ENCODE measurements at regions of chr15 and their contacts with region 1.

Region 1: DNA sequence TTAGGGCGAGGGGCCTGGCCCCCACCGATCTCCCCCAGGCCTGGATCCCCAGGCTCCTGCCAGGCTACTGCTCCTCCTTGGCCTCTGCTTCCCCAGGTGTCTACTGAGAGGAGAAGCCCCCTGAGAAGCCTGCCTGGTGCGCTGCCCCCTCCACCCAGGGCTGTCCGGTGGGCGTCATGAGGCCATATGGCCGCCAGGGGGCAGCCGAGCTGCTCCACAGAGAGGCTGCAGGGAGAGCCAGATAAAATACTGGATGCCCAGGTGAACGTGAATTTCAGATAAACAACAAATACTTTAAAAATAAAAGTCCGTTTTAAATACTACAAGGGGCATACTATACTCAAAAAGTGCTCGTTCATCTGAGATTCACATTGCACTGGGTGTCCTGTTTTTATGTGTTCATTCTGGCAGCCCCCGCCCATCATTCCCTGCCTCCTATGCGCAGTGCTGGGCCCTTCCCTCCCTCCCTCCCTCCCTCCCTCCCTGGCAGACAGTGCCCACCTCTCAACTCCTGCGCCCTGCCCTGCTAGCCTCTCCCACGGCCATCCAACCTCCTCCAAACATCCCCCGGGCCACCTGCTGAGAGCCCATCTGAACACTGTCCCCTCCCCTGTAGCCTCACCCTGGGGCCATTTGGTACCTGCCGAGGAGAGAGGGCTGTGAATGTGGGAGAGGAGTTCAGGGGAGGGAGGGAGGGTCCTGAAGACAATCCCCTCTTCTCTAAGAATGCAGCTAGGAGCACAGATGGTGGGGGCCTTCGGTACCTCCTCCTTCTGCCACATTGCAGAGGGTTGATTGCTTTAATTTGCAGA is 29.6 kb downstream of the PSTPIP1 start:
- DNase-seq: peak; percentile 74
- ATAC-seq: peak; percentile 78
- H3K4me3 ChIP-seq: no peak overlapping the region
- H3K4me3 Mint-ChIP-seq: no peak overlapping the region
- H3K27ac ChIP-seq: no peak overlapping the region
- H3K27ac Mint-ChIP-seq: no peak overlapping the region
- H3K4me1 ChIP-seq: peaks cover 4 to 21% of the 10 kb centered on the region in 2 donors
- H3K4me1 Mint-ChIP-seq: peaks cover 17% of the 10 kb centered on the region
- H3K27me3 ChIP-seq: no peaks in the 10 kb centered on the region
- H3K27me3 Mint-ChIP-seq: no peaks in the 10 kb centered on the region
- CTCF ChIP-seq: peak; percentile 98

Region 2: GRCh38 chr15:76730262-76730661 is 294.2 kb before region 1 on chr15:
- CTCF ChIA-PET with region 1: no interaction called
- POLR2A ChIA-PET with region 1: no interaction called
- intact Hi-C with region 1: no loop called
- DNase-seq: no peak
- ATAC-seq: no peak
- H3K4me3 ChIP-seq: no peak overlapping the region
- H3K4me3 Mint-ChIP-seq: no peak overlapping the region
- H3K27ac ChIP-seq: no peak overlapping the region
- H3K27ac Mint-ChIP-seq: no peak overlapping the region
- H3K4me1 ChIP-seq: peaks cover 2 to 6% of the 10 kb centered on the region in 2 donors
- H3K4me1 Mint-ChIP-seq: peaks cover 12% of the 10 kb centered on the region
- H3K27me3 ChIP-seq: no peaks in the 10 kb centered on the region
- H3K27me3 Mint-ChIP-seq: no peaks in the 10 kb centered on the region
- CTCF ChIP-seq: no peak

Region 3: GRCh38 chr15:76905013-76905839 is 119.3 kb before region 1 on chr15 and contains the start of gene SCAPER:
- CTCF ChIA-PET with region 1: interaction called, 7 read pairs
- POLR2A ChIA-PET with region 1: no interaction called
- intact Hi-C with region 1: loop called (anchors 1 kb)
- DNase-seq: peak; percentile 94
- ATAC-seq: peak; percentile 88
- H3K4me3 ChIP-seq: peak within 1 kb of the TSS; percentile 76 to 93 (median 80)
- H3K4me3 Mint-ChIP-seq: peak within 1 kb of the TSS; percentile 91
- H3K27ac ChIP-seq: peak within 1 kb of the TSS; percentile 82 to 92
- H3K27ac Mint-ChIP-seq: peak within 1 kb of the TSS; percentile 89
- H3K4me1 ChIP-seq: peaks cover 32 to 36% of the 10 kb centered on the region in 2 donors
- H3K4me1 Mint-ChIP-seq: peaks cover 52% of the 10 kb centered on the region
- H3K27me3 ChIP-seq: no peaks in the 10 kb centered on the region
- H3K27me3 Mint-ChIP-seq: no peaks in the 10 kb centered on the region
- CTCF ChIP-seq: no peak
- total RNA-seq, gene SCAPER: 59.5 and 61.6 TPM in 2 replicates

Region 4: DNA sequence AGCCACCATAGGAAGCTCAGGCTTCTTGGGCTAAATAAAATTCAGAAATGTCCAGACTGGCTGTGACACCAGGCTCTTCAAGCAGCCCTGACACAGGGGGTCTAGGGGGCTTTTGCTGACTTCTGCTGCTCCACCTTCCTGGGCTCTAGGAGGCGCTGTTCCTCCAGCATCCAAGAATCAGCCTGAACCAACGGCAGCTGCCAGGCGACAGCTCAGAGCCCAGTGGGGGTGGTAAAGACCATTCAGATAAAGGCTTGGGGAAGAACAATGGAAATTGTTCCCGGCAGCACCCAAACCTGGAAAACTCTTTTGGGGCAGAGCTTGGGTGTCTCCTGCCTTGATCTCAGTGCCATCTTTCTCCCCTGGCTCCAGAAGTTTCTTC is 51.1 kb before region 1 on chr15:
- CTCF ChIA-PET with region 1: interaction called, 67 read pairs
- POLR2A ChIA-PET with region 1: no interaction called
- intact Hi-C with region 1: no loop called
- DNase-seq: peak; percentile 63
- ATAC-seq: no peak
- H3K4me3 ChIP-seq: no peak overlapping the region
- H3K4me3 Mint-ChIP-seq: no peak overlapping the region
- H3K27ac ChIP-seq: no peak overlapping the region
- H3K27ac Mint-ChIP-seq: no peak overlapping the region
- H3K4me1 ChIP-seq: peaks cover 3 to 6% of the 10 kb centered on the region in 2 donors
- H3K4me1 Mint-ChIP-seq: peaks cover 3% of the 10 kb centered on the region
- H3K27me3 ChIP-seq: no peaks in the 10 kb centered on the region
- H3K27me3 Mint-ChIP-seq: no peaks in the 10 kb centered on the region
- CTCF ChIP-seq: peak; percentile 48

Region 5: DNA sequence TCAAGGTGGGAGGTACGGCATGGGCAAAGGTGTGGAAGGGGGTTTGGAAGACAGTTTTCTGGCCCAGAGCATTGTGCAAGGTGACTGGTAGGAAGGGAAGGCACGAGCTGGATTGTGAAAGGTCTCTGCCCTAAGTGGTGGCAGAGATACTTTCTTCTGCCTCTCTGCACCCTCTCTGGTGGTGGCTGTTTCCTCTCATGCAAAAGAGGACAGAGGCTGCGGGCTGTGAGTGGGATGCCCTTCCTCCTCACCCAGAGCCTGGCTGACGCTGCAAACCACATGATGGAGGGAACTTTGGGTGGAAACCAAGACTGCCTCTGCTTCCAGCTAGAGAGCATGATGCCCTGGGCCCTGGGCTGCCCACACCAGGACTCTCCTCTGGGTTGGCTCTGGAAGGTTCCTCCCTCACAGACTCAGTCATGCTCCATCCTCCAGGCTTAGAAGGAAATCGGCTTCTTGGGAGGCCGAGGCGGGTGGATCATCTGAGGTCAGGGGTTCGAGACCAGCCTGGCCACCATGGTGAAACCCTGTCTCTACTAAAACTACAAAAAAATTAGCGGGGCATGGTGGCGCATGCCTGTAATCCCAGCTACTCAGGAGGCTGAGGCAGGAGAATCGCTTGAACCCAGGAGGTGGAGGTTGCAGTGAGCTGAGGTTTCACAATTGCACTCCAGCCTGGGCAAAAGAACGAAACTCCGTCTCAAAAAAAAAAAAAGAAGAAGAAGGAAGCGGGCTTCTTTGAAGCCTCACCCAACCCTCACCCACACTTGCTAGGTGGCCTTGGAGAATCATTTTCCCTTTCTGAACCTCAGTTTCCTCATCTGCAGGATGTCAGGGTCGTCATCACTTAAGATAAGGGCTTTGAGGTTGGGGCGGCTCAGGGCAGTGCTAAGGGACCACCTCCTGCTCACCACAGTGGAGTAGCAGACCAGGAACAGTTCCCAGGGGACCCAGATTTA is 21.2 kb before region 1 on chr15:
- CTCF ChIA-PET with region 1: interaction called, 18 read pairs
- POLR2A ChIA-PET with region 1: no interaction called
- intact Hi-C with region 1: no loop called
- DNase-seq: peak; percentile 78
- ATAC-seq: peak; percentile 89
- H3K4me3 ChIP-seq: peak overlapping the region in 2 of 5 experiments; percentile 6 to 21
- H3K4me3 Mint-ChIP-seq: peak overlapping the region; percentile 80
- H3K27ac ChIP-seq: peak overlapping the region; percentile 23 to 44
- H3K27ac Mint-ChIP-seq: peak overlapping the region; percentile 84
- H3K4me1 ChIP-seq: peaks cover 38 to 49% of the 10 kb centered on the region in 2 donors
- H3K4me1 Mint-ChIP-seq: peaks cover 53% of the 10 kb centered on the region
- H3K27me3 ChIP-seq: no peaks in the 10 kb centered on the region
- H3K27me3 Mint-ChIP-seq: no peaks in the 10 kb centered on the region
- CTCF ChIP-seq: no peak

Region 6: DNA sequence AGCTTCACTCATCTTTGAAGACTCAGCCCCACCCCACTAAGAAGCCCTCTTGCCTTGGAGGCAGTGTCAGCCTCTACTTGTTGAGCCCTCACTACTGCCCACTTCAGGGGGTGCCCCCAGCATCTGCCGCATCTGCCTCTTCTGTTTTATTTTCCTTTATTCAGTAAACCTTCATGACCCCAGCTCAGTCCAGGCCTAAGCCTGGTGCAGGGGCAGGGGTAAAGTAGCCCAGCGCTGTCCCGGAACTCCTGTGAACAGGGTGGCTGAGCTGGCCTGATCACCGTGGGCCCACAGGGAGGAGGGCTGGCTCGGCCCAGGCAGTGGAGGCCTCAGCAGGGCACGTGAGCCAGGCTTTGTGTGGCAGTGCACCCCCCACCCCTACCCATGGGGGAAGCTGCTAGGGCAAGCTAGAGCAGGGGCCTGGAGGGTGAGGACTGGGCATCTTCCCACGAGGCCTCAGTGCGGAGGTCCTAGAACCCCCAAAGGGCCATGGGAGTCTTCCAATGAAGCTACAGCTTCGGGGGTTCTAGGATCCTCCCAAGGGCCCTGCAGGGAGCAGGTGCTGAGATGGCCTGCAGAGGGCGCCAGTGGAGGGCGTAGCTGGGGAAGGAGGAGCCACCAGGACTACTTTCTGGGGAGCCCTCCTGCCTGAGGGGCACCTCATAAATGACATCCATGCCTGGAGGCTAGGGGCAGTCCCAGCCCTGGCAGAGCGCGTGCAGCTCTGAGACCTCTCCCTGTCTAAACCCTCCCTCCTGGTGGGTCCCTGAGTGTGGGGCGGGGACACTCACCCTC is 10.4 kb after region 1 on chr15:
- CTCF ChIA-PET with region 1: interaction called, 12 read pairs
- POLR2A ChIA-PET with region 1: no interaction called
- intact Hi-C with region 1: no loop called
- DNase-seq: peak; percentile 65
- ATAC-seq: peak; percentile 22
- H3K4me3 ChIP-seq: no peak overlapping the region
- H3K4me3 Mint-ChIP-seq: no peak overlapping the region
- H3K27ac ChIP-seq: peak overlapping the region; percentile 22 to 57
- H3K27ac Mint-ChIP-seq: peak overlapping the region; percentile 75
- H3K4me1 ChIP-seq: peaks cover 12 to 37% of the 10 kb centered on the region in 2 donors
- H3K4me1 Mint-ChIP-seq: peaks cover 18% of the 10 kb centered on the region
- H3K27me3 ChIP-seq: no peaks in the 10 kb centered on the region
- H3K27me3 Mint-ChIP-seq: no peaks in the 10 kb centered on the region
- CTCF ChIP-seq: peak; percentile 78